PC-3 (cell line): ENCODE measurements at regions of chr1 and their contacts with region 1.

Region 1: DNA sequence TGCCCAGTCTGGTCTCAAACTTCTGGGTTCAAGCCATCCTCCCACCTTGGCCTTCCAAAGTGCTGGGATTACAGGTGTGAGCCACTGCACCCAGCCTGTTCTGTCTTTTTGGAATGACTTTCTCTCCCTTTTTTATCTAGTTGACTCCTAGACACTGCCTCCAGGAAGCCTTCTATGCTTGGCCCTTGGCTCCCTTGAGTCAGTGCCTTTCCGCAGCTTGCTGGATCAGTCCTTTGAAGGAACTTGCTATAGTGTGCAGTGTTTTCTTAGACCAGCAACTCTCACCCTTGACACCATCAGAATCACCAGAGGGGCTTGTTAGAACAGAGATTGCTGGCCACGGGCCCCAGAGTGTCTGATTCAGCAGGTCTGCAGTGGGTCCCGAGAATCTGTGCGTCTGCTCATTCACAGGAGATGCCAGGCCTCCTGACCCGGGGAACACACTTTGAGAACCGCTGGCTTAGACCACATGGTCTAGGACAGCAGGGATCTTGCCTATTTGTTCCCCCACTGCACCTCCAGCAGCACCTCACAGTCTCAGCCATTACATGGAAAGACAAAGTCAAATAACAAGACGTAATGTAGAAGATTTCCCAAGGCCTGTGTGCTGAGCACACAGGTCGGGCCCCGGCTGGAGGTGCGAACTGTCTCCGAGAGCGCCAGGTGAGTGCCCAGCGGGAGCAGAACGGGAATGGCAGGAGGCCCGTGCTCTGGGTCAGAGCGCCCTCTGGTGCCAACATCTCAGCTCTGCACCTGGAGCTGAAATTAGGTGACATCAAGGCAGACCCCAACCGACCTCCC is 27.4 kb upstream of the CTPS1 start:
- DNase-seq: peak; percentile 87
- ATAC-seq: peak; percentile 72
- H3K4me3 ChIP-seq: no peak overlapping the region
- H3K27ac ChIP-seq: no peak overlapping the region
- H3K4me1 ChIP-seq: peaks cover 27% of the 10 kb centered on the region
- H3K27me3 ChIP-seq: no peaks in the 10 kb centered on the region
- CTCF ChIP-seq: peak; percentile 92

Region 2: GRCh38 chr1:40612345-40612831 is 339.8 kb before region 1 on chr1:
- CTCF ChIA-PET with region 1: no interaction called
- POLR2A ChIA-PET with region 1: no interaction called
- intact Hi-C with region 1: loop called (anchors 5 kb)
- DNase-seq: peak; percentile 85
- ATAC-seq: peak; percentile 99
- H3K4me3 ChIP-seq: peak overlapping the region; percentile 55; the same call in 1 of the 2 replicates
- H3K27ac ChIP-seq: no peak overlapping the region
- H3K4me1 ChIP-seq: no peaks in the 10 kb centered on the region
- H3K27me3 ChIP-seq: no peaks in the 10 kb centered on the region
- CTCF ChIP-seq: peak; percentile 92

Region 3: GRCh38 chr1:40774266-40774998 is 177.7 kb before region 1 on chr1:
- CTCF ChIA-PET with region 1: interaction called, 11 read pairs
- POLR2A ChIA-PET with region 1: no interaction called
- intact Hi-C with region 1: loop called (anchors 5 kb)
- DNase-seq: peak; percentile 67
- ATAC-seq: peak; percentile 72
- H3K4me3 ChIP-seq: no peak overlapping the region
- H3K27ac ChIP-seq: no peak overlapping the region
- H3K4me1 ChIP-seq: no peaks in the 10 kb centered on the region
- H3K27me3 ChIP-seq: no peaks in the 10 kb centered on the region
- CTCF ChIP-seq: peak; percentile 92

Region 4: DNA sequence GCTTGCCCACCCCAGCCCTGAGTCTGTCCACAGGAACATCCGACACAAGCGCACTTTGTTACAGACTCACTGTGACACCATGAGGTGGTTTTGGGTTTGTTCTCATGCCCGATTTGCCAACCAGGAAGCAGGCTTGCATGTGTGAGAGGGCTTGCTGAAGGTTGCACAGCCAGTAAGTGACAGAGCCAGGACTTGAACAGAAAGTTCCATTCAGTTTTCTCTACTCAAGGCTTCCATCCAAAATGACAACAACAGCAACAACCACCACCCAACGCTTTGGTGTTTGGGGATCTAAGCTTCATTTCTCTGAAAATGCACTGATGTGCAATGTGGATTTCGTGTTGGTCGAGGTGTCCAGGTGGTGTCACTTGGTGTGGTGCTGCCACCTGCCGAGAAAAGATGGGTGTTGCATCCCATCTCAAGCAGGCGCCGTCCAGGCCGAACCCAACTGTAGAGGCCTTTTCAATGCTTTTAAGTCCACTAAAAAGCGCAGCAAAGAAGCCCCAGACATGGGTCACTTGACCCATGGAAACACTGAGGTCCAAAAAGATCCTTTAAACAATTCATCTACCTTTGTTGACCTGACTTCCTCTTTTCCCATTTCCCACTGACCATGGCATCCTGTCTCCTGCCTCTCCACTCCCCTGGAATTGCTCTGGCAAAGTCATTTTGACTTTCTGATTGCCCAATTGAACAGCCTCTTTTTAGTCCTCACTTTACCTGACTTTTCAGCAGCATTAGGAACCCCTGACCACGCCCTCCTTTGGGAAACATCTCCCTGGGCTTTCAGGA is 102.1 kb before region 1 on chr1:
- CTCF ChIA-PET with region 1: interaction called, 8 read pairs
- POLR2A ChIA-PET with region 1: no interaction called
- intact Hi-C with region 1: loop called (anchors 1 kb)
- DNase-seq: peak; percentile 78
- ATAC-seq: peak; percentile 75
- H3K4me3 ChIP-seq: no peak overlapping the region
- H3K27ac ChIP-seq: no peak overlapping the region
- H3K4me1 ChIP-seq: 0 out of 2 replicates have a peak, but pooled peaks cover 10% of the 10 kb centered on the region
- H3K27me3 ChIP-seq: no peaks in the 10 kb centered on the region
- CTCF ChIP-seq: peak; percentile 90

Region 5: GRCh38 chr1:40862008-40862863 is 89.9 kb before region 1 on chr1 and contains the start of gene CITED4:
- CTCF ChIA-PET with region 1: interaction called, 12 read pairs
- POLR2A ChIA-PET with region 1: no interaction called
- intact Hi-C with region 1: loop called (anchors 1 kb)
- DNase-seq: peak; percentile 96
- ATAC-seq: peak; percentile 95
- H3K4me3 ChIP-seq: peak within 1 kb of the TSS; percentile 73
- H3K27ac ChIP-seq: no peak within 1 kb of the TSS
- H3K4me1 ChIP-seq: peaks cover 7% of the 10 kb centered on the region
- H3K27me3 ChIP-seq: no peaks in the 10 kb centered on the region
- CTCF ChIP-seq: peak; percentile 43; the same call in 1 of the 2 replicates
- total RNA-seq, gene CITED4: 10.6 and 12.0 TPM in 2 replicates

Region 6: GRCh38 chr1:40898431-40898901 is 53.7 kb before region 1 on chr1:
- CTCF ChIA-PET with region 1: no interaction called
- POLR2A ChIA-PET with region 1: no interaction called
- intact Hi-C with region 1: loop called (anchors 2 kb)
- DNase-seq: peak; percentile 54
- ATAC-seq: no peak; the same call in 1 of the 2 replicates
- H3K4me3 ChIP-seq: no peak overlapping the region
- H3K27ac ChIP-seq: peak overlapping the region; percentile 74
- H3K4me1 ChIP-seq: peaks cover 53% of the 10 kb centered on the region
- H3K27me3 ChIP-seq: no peaks in the 10 kb centered on the region
- CTCF ChIP-seq: no peak

Region 7: GRCh38 chr1:40911105-40911504 is 41.0 kb before region 1 on chr1:
- CTCF ChIA-PET with region 1: no interaction called
- POLR2A ChIA-PET with region 1: no interaction called
- intact Hi-C with region 1: no loop called
- DNase-seq: no peak
- ATAC-seq: no peak
- H3K4me3 ChIP-seq: no peak overlapping the region
- H3K27ac ChIP-seq: no peak overlapping the region
- H3K4me1 ChIP-seq: peaks cover 11% of the 10 kb centered on the region; the same call in 1 of the 2 replicates
- H3K27me3 ChIP-seq: no peaks in the 10 kb centered on the region
- CTCF ChIP-seq: no peak

Region 8: GRCh38 chr1:41003640-41004220 is 51.6 kb after region 1 on chr1:
- CTCF ChIA-PET with region 1: interaction called, 6 read pairs
- POLR2A ChIA-PET with region 1: no interaction called
- intact Hi-C with region 1: loop called (anchors 1 kb)
- DNase-seq: peak; percentile 99
- ATAC-seq: peak; percentile 99
- H3K4me3 ChIP-seq: no peak overlapping the region
- H3K27ac ChIP-seq: peak overlapping the region; percentile 7; the same call in 1 of the 2 replicates
- H3K4me1 ChIP-seq: peaks cover 18% of the 10 kb centered on the region
- H3K27me3 ChIP-seq: no peaks in the 10 kb centered on the region
- CTCF ChIP-seq: peak; percentile 80

Region 9: GRCh38 chr1:41073971-41074370 is 121.8 kb after region 1 on chr1:
- CTCF ChIA-PET with region 1: no interaction called
- POLR2A ChIA-PET with region 1: no interaction called
- intact Hi-C with region 1: no loop called
- DNase-seq: peak; percentile 45
- ATAC-seq: peak; percentile 70
- H3K4me3 ChIP-seq: no peak overlapping the region
- H3K27ac ChIP-seq: no peak overlapping the region
- H3K4me1 ChIP-seq: 0 out of 2 replicates have a peak, but pooled peaks cover 4% of the 10 kb centered on the region
- H3K27me3 ChIP-seq: no peaks in the 10 kb centered on the region
- CTCF ChIP-seq: no peak

Region 10: DNA sequence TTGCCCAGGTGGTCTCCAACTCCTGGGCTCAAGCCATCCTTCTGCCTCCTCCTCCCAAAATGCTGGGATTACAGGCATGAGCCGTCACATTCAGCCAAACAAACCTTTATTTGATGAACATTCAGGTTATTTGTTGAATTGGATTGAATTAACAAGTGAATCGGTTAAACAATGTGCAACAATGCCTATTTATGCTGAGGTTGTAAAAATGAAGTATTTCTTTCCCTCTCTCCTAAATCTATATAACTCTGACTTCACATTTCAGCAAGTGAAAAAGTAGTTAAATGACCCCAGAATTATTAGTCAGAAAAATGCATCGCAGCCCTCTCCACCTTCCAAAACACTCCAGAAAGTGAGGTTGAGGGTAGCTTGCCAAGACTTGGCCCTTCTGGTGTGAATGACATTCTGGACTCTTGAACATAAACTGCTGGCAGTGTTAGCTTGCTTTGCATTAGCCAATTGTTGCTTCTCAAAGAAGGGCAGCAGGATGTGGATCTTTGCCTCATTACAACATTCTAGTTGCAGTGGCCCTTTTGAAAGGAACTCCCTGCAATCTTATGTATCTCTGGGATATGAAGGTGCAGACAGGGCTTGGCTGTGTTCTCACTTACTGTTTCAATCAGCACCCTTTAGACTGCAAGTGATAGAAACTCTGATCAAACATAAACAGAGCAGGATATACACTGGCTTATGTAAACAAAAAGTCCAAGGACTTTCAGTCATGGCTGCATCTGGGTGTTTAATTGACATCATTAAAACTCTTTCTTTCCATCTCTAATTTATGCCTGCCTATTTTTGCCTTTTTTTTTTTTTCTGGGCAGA is 509.9 kb after region 1 on chr1:
- CTCF ChIA-PET with region 1: no interaction called
- POLR2A ChIA-PET with region 1: no interaction called
- intact Hi-C with region 1: no loop called
- DNase-seq: no peak
- ATAC-seq: no peak
- H3K4me3 ChIP-seq: no peak overlapping the region
- H3K27ac ChIP-seq: no peak overlapping the region
- H3K4me1 ChIP-seq: no peaks in the 10 kb centered on the region
- H3K27me3 ChIP-seq: no peaks in the 10 kb centered on the region
- CTCF ChIP-seq: no peak